A673 (cell line): ENCODE measurements at regions of chr16 and their contacts with region 1.

Region 1: GRCh38 chr16:57846078-57846697 is 43.9 kb upstream of the KIFC3 start:
- DNase-seq: peak; percentile 89
- H3K4me3 ChIP-seq: peak overlapping the region; percentile 39
- H3K27ac ChIP-seq: peak overlapping the region; percentile 100
- H3K4me1 ChIP-seq: peaks cover 79% of the 10 kb centered on the region
- H3K27me3 ChIP-seq: no peaks in the 10 kb centered on the region
- CTCF ChIP-seq: no peak

Region 2: GRCh38 chr16:57741660-57742191 is 104.5 kb before region 1 on chr16:
- CTCF ChIA-PET with region 1: no interaction called
- POLR2A ChIA-PET with region 1: interaction called, 5 read pairs
- intact Hi-C with region 1: loop called (anchors 5 kb)
- DNase-seq: peak; percentile 42
- H3K4me3 ChIP-seq: no peak overlapping the region
- H3K27ac ChIP-seq: peak overlapping the region; percentile 53
- H3K4me1 ChIP-seq: peaks cover 44% of the 10 kb centered on the region
- H3K27me3 ChIP-seq: no peaks in the 10 kb centered on the region
- CTCF ChIP-seq: no peak

Region 3: DNA sequence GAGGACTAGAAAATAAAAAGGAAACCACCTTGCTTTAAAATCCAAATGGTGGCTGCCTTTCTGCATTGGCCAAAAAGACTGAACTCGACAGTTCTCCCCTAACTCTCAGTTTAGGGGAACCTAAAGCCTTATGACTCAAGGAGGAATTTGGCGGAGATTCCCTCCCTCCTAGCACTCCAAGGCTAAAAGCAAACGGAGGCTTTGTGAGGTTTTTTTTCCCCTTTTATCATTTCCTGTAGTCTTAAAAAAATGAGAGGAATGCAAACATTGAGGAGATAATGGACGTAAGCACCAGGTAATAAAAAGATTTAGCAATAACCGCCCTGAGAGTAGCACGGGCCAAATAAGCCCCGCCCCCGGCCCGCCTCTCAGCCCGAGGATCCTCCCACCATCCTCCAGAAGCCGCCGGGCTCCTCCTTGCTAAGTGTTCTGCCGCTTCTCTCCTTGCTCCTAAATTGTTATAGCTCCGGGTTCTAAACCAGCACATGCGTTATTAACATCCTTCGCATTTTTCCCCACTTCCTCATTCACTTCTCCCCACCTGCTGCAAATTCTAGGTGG is 38.1 kb before region 1 on chr16:
- CTCF ChIA-PET with region 1: interaction called, 5 read pairs
- POLR2A ChIA-PET with region 1: no interaction called
- intact Hi-C with region 1: loop called (anchors 2 kb)
- DNase-seq: peak; percentile 95
- H3K4me3 ChIP-seq: no peak overlapping the region
- H3K27ac ChIP-seq: peak overlapping the region; percentile 95
- H3K4me1 ChIP-seq: peaks cover 67% of the 10 kb centered on the region
- H3K27me3 ChIP-seq: no peaks in the 10 kb centered on the region
- CTCF ChIP-seq: no peak